Activated CD8-positive, alpha-beta T cell treated with anti-CD3 and anti-CD28 coated beads for 36 hours (primary cell): ENCODE measurements at regions of chr3 and their contacts with region 1.

Region 1: DNA sequence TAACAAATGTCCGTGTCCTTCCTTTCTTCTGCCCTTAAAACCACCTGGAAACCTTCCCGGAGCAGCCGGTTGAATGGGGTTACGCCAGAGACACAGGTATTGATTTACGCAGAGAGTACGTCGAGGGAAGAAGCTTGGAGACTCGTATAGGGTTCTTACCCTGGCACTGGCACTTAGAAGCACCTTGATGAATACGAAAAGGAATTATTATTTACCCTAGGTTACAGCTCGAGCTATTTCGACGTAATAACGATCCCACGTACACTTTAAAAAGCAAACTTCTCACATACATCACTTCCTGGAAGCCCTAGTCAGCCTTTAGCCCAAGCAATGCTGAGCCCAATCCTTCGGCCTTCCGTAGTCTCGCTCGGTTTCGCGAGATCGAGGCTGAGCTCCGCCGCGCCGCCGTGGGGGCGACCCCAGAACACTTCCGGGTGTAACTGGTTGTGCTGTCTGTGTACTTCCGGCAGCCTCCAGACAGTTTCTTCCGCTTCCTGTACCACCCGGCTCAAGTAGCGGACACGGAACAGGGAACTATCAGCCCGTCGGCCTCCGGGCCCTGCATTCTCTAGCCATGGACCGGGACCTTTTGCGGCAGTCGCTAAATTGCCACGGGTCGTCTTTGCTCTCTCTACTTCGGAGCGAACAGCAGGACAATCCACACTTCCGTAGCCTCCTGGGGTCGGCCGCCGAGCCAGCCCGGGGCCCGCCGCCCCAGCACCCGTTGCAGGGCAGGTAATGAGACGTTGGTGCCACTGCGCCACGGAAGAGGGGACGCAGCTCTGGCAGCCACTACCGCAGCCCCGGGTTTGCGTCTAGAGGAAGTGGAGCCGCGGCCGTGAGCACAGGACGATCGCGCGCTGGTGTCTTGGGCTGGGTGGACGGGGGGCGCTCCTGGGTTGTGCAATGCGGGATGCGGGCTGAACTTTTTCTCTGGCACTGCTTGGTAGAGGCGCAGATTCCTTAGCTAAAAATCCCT is at the start of gene TTC14:
- DNase-seq: peak; percentile 96
- ATAC-seq: peak; percentile 97
- H3K4me3 Mint-ChIP-seq: peak within 1 kb of the TSS; percentile 99
- H3K27ac Mint-ChIP-seq: peak within 1 kb of the TSS; percentile 97
- H3K4me1 Mint-ChIP-seq: peaks cover 21% of the 10 kb centered on the region
- H3K27me3 Mint-ChIP-seq: peaks cover 12% of the 10 kb centered on the region
- CTCF ChIP-seq: no peak
- total RNA-seq, gene TTC14: 40.5 to 47.2 TPM

Region 2: DNA sequence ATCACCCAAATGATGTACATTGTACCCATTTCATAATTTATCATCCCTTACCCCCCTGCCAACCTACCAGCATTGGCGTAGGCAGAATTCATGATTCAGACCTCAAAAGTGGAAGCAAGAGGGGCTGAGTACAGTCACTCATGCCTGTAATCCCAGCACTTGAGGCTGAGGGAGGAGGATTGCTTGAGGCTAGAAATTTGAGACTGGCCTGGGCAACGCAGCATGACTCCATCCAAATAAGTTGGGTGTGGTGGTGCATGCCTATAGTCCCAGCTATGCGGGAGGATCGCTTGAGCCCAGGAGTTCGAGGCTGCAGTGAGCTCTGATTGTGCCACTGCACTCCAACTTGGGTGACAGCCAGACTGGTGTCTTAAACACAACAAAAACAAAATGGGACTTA is 10.4 kb after region 1 on chr3:
- CTCF ChIA-PET with region 1: interaction called, 3 read pairs
- POLR2A ChIA-PET with region 1: interaction called, 17 read pairs
- intact Hi-C with region 1: no loop called
- DNase-seq: no peak
- ATAC-seq: no peak
- H3K4me3 Mint-ChIP-seq: no peak overlapping the region
- H3K27ac Mint-ChIP-seq: no peak overlapping the region
- H3K4me1 Mint-ChIP-seq: no peaks in the 10 kb centered on the region
- H3K27me3 Mint-ChIP-seq: no peaks in the 10 kb centered on the region
- CTCF ChIP-seq: no peak

Region 3: DNA sequence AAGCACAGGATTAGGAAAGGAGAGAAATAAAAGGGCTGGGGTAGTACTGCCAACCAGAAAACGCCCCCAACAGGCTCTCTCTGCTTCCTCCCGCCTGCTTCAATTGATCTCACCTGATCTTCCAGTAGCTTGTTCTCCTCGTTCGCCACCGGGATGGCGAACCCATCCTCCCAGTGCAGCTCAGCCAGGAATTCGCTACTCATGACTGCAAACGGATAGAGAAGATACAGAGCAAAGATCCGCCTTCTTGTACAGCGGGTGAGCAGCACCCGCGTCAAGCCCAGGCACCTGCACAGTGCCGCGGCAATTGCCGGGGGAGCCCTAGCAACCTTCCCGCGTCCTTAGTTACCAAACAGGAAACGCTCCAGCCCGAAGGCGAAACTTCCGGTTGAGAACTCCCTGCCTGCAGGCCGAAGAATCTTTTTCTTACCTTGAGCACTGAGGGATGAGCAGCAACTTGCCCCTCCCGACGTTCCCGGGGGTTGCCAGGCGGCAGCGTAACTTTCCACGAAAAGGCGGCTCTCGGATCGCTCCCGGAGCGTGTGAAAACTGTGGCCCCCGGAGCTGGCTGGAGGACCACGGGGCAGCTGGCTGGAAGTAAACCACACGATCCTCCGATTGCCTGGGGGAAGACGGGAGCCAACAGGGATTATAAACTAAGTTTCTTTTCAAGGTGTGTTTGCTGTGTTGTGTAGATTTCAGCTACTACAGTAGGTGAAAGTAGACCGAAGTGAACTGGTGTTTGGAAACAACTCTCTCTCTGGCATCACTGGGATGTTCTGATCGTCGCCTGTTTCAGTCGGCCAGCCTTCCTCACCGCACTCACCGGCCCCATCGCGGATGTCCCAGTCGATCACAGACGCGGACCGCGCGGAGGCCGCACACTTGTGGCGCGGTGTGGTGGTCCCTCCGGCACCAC is 77.5 kb after region 1 on chr3 and contains the start of gene CCDC39:
- CTCF ChIA-PET with region 1: interaction called, 4 read pairs
- POLR2A ChIA-PET with region 1: interaction called, 11 read pairs
- intact Hi-C with region 1: no loop called
- DNase-seq: peak; percentile 75
- ATAC-seq: peak; percentile 91
- H3K4me3 Mint-ChIP-seq: peak within 1 kb of the TSS; percentile 77
- H3K27ac Mint-ChIP-seq: no peak within 1 kb of the TSS
- H3K4me1 Mint-ChIP-seq: peaks cover 15% of the 10 kb centered on the region
- H3K27me3 Mint-ChIP-seq: peaks cover 51% of the 10 kb centered on the region
- CTCF ChIP-seq: no peak
- total RNA-seq, gene CCDC39: not detected

Region 4: GRCh38 chr3:180947761-180948633 is 346.0 kb after region 1 on chr3:
- CTCF ChIA-PET with region 1: no interaction called
- POLR2A ChIA-PET with region 1: no interaction called
- intact Hi-C with region 1: no loop called
- DNase-seq: no peak
- ATAC-seq: no peak
- H3K4me3 Mint-ChIP-seq: no peak overlapping the region
- H3K27ac Mint-ChIP-seq: peak overlapping the region; percentile 57
- H3K4me1 Mint-ChIP-seq: peaks cover 8% of the 10 kb centered on the region
- H3K27me3 Mint-ChIP-seq: no peaks in the 10 kb centered on the region
- CTCF ChIP-seq: no peak

Region 5: GRCh38 chr3:180989291-180990163 is 387.6 kb after region 1 on chr3 and contains the start of gene DNAJC19:
- CTCF ChIA-PET with region 1: no interaction called
- POLR2A ChIA-PET with region 1: no interaction called
- intact Hi-C with region 1: loop called (anchors 10 kb)
- DNase-seq: peak; percentile 94
- ATAC-seq: peak; percentile 96
- H3K4me3 Mint-ChIP-seq: peak within 1 kb of the TSS; percentile 82
- H3K27ac Mint-ChIP-seq: peak within 1 kb of the TSS; percentile 96
- H3K4me1 Mint-ChIP-seq: peaks cover 26% of the 10 kb centered on the region
- H3K27me3 Mint-ChIP-seq: no peaks in the 10 kb centered on the region
- CTCF ChIP-seq: no peak
- total RNA-seq, gene DNAJC19: 67.6 to 69.3 TPM

Region 6: DNA sequence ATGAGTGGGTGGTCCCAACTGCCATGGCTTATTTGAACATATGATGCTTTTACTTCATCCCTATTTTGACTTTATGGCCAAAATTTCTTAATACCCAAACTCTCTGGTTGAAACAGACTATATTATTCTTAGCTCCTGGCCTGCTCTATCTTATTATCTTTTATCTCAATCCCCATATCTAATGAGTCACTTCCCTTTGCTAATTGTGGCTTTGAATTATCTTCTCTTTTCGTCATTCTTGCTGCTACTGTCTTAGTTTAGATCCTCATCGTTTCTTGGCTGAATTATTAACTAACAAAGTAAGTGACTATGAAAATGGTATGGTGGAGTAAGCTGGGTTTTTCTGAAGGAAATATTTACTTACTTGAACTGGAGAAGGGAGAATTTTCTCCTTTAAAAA is 415.7 kb after region 1 on chr3:
- CTCF ChIA-PET with region 1: no interaction called
- POLR2A ChIA-PET with region 1: no interaction called
- intact Hi-C with region 1: no loop called
- DNase-seq: no peak
- ATAC-seq: no peak
- H3K4me3 Mint-ChIP-seq: no peak overlapping the region
- H3K27ac Mint-ChIP-seq: no peak overlapping the region
- H3K4me1 Mint-ChIP-seq: no peaks in the 10 kb centered on the region
- H3K27me3 Mint-ChIP-seq: peaks cover 13% of the 10 kb centered on the region
- CTCF ChIP-seq: no peak